ENCODE measurements at regions of chr2 and their contacts with region 1.

Region 1: GRCh38 chr2:118046634-118047210 is 32.9 kb upstream of the CCDC93 start:
- DNase-seq: no peak
- H3K4me3 Mint-ChIP-seq: no peak overlapping the region
- H3K27ac Mint-ChIP-seq: no peak overlapping the region
- H3K4me1 Mint-ChIP-seq: peaks cover 2% of the 10 kb centered on the region
- H3K27me3 Mint-ChIP-seq: peaks cover 45% of the 10 kb centered on the region

Region 2: GRCh38 chr2:118148809-118149208 is 102.1 kb after region 1 on chr2:
- CTCF ChIA-PET with region 1: interaction called, 5 read pairs
- intact Hi-C with region 1: loop called (anchors 1 kb)
- DNase-seq: no peak
- H3K4me3 Mint-ChIP-seq: no peak overlapping the region
- H3K27ac Mint-ChIP-seq: no peak overlapping the region
- H3K4me1 Mint-ChIP-seq: peaks cover 9% of the 10 kb centered on the region
- H3K27me3 Mint-ChIP-seq: peaks cover 13% of the 10 kb centered on the region

Region 3: GRCh38 chr2:118221666-118222594 is 175.2 kb after region 1 on chr2:
- CTCF ChIA-PET with region 1: interaction called, 7 read pairs
- intact Hi-C with region 1: loop called (anchors 1 kb)
- DNase-seq: peak; percentile 56
- H3K4me3 Mint-ChIP-seq: no peak overlapping the region
- H3K27ac Mint-ChIP-seq: no peak overlapping the region
- H3K4me1 Mint-ChIP-seq: peaks cover 12% of the 10 kb centered on the region
- H3K27me3 Mint-ChIP-seq: peaks cover 57% of the 10 kb centered on the region

Region 4: GRCh38 chr2:118492335-118492734 is 445.6 kb after region 1 on chr2:
- CTCF ChIA-PET with region 1: no interaction called
- intact Hi-C with region 1: loop called (anchors 5 kb)
- DNase-seq: no peak
- H3K4me3 Mint-ChIP-seq: no peak overlapping the region
- H3K27ac Mint-ChIP-seq: no peak overlapping the region
- H3K4me1 Mint-ChIP-seq: no peaks in the 10 kb centered on the region
- H3K27me3 Mint-ChIP-seq: peaks cover 17% of the 10 kb centered on the region

Measured in activated naive CD4-positive, alpha-beta T cell treated with anti-CD3 and anti-CD28 coated beads for 36 hours (primary cell).